H1 (cell line): ENCODE measurements at regions of chr18 and their contacts with region 1.

Region 1: DNA sequence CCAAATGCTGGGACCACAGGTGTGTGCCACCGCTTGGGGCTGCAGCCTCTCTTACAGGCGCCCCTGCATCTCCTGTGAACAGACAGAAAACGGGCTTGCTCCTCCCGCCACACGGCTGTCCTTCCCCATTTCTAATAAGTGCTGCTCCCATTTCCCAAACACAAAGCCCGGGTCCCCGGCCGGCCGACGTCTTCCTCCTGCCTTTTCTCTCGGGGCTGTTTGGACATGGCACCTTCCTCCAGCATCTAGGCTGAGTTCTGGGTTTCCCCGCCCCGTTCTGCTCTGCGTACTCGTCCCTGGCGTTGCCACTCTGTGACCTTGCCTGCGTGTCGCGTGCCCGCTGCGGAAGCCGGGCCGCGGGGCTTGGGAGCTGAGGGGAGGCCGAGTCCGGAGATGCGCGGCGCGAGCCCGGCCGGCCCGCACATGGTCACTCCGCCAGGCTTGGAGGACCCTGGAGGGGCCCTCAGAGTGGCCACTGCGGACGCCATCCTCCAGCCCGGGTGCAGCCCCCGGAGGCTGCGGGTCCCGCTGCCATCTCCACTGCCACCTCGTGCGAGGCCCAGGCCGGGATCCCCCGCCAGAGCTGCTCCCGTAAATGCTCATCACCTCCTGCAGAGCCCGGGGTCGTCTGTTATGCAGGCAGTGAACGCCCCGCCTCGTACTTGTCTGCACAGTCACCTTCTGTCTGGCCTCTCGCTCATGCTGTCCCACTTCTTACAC is 26.3 kb downstream of the PRELID3A start:
- DNase-seq: no peak
- H3K4me3 ChIP-seq: no peak overlapping the region
- H3K27ac ChIP-seq: no peak overlapping the region
- H3K4me1 ChIP-seq: peaks cover 0 to 5% (median 0%) of the 10 kb centered on the region in 4 experiments; a peak in 1 of 7 replicates
- H3K27me3 ChIP-seq: peaks cover 0 to 2% (median 0%) of the 10 kb centered on the region in 4 experiments; a peak in 1 of 7 replicates
- CTCF ChIP-seq: no peak
- EP300 ChIP-seq: no peak
- POLR2A ChIP-seq: no peak
- RAD21 ChIP-seq: no peak

Region 2: GRCh38 chr18:12420831-12421421 is 13.1 kb before region 1 on chr18:
- CTCF ChIA-PET with region 1: interaction called, 9 read pairs
- POLR2A ChIA-PET with region 1: interaction called, 10 read pairs
- DNase-seq: peak in 1 of 2 experiments; percentile 83
- H3K4me3 ChIP-seq: peak overlapping the region; percentile 42 to 64 (median 55); a peak in 7 of 8 replicates
- H3K27ac ChIP-seq: peak overlapping the region; percentile 67; the same call in 1 of the 2 replicates
- H3K4me1 ChIP-seq: peaks cover 0 to 12% (median 6%) of the 10 kb centered on the region in 4 experiments; a peak in 6 of 7 replicates
- H3K27me3 ChIP-seq: no peaks in the 10 kb centered on the region
- CTCF ChIP-seq: peak in 1 of 3 experiments; percentile 0; a peak in 2 of 4 replicates
- EP300 ChIP-seq: peak in 1 of 2 experiments; percentile 94; a peak in 2 of 3 replicates
- POLR2A ChIP-seq: peak in 1 of 2 experiments; percentile 72; a peak in 2 of 3 replicates
- RAD21 ChIP-seq: 0 out of 4 replicates have a peak, but pooled peaks of 1 of the 2 experiments have one; percentile 10